ENCODE measurements at regions of chr21 and their contacts with region 1.

Region 1: GRCh38 chr21:20999659-21000058 is 1.4 kb downstream of the NCAM2 start:
- DNase-seq: peak; percentile 62
- H3K4me3 ChIP-seq: peak overlapping the region; percentile 1 to 95; a peak in 2 of 4 replicates
- H3K27ac ChIP-seq: no peak overlapping the region
- H3K4me1 ChIP-seq: peaks cover 0 to 7% of the 10 kb centered on the region in 2 experiments; a peak in 2 of 4 replicates
- H3K27me3 ChIP-seq: no peaks in the 10 kb centered on the region
- CTCF ChIP-seq: peak; percentile 90
- EP300 ChIP-seq: no peak
- RAD21 ChIP-seq: peak; percentile 96

Region 2: DNA sequence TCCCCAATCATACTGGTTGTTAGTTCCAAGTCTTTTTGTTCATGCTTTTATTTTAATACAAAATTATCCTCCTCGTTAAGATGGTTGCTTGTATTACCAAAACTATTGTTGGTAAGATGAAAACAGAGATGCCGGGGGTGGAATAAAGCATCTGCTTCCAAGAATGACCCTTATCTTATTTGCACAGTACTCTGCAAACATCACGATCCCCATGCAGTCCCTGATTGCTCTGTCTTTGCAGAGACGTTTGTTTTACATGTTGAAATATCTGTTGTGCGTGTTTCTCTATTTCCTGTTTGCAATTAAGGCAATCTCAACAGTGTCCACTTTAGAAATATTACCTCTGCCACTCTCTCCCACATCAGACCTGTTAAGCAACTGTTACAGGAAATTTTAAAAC is 142.7 kb before region 1 on chr21:
- CTCF ChIA-PET with region 1: no interaction called
- POLR2A ChIA-PET with region 1: no interaction called
- DNase-seq: no peak
- H3K4me3 ChIP-seq: no peak overlapping the region
- H3K27ac ChIP-seq: no peak overlapping the region
- H3K4me1 ChIP-seq: no peaks in the 10 kb centered on the region
- H3K27me3 ChIP-seq: no peaks in the 10 kb centered on the region
- CTCF ChIP-seq: no peak
- EP300 ChIP-seq: no peak
- RAD21 ChIP-seq: no peak

Region 3: GRCh38 chr21:21018821-21019220 is 19.2 kb after region 1 on chr21:
- CTCF ChIA-PET with region 1: interaction called, 17 read pairs
- POLR2A ChIA-PET with region 1: no interaction called
- DNase-seq: no peak
- H3K4me3 ChIP-seq: no peak overlapping the region
- H3K27ac ChIP-seq: no peak overlapping the region
- H3K4me1 ChIP-seq: peaks cover 0 to 2% of the 10 kb centered on the region in 2 experiments; a peak in 2 of 4 replicates
- H3K27me3 ChIP-seq: no peaks in the 10 kb centered on the region
- CTCF ChIP-seq: no peak
- EP300 ChIP-seq: no peak
- RAD21 ChIP-seq: no peak

Region 4: DNA sequence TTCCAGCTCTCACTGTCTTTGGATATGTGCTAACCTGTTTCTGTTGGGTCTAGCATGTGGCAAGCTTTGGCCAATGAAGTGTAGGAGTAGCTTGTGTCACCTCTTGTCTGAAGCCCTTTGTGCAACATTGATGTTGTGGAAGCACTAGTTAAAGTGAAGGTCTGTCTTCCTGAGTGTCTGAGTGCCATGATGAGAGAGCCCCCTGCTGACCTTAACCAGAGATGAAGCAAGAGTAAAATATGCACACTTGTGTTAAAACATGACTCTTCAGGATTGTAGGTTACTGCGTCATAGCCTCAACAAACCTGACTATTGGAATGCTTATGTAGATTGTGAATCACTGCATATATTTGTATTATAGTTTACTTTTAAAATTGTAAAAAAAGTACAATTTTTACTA is 102.3 kb after region 1 on chr21:
- CTCF ChIA-PET with region 1: interaction called, 51 read pairs
- POLR2A ChIA-PET with region 1: no interaction called
- DNase-seq: peak; percentile 15
- H3K4me3 ChIP-seq: no peak overlapping the region; a peak in 1 of 4 replicates
- H3K27ac ChIP-seq: no peak overlapping the region
- H3K4me1 ChIP-seq: no peaks in the 10 kb centered on the region
- H3K27me3 ChIP-seq: no peaks in the 10 kb centered on the region
- CTCF ChIP-seq: peak; percentile 44
- EP300 ChIP-seq: no peak
- RAD21 ChIP-seq: peak; percentile 74

Region 5: DNA sequence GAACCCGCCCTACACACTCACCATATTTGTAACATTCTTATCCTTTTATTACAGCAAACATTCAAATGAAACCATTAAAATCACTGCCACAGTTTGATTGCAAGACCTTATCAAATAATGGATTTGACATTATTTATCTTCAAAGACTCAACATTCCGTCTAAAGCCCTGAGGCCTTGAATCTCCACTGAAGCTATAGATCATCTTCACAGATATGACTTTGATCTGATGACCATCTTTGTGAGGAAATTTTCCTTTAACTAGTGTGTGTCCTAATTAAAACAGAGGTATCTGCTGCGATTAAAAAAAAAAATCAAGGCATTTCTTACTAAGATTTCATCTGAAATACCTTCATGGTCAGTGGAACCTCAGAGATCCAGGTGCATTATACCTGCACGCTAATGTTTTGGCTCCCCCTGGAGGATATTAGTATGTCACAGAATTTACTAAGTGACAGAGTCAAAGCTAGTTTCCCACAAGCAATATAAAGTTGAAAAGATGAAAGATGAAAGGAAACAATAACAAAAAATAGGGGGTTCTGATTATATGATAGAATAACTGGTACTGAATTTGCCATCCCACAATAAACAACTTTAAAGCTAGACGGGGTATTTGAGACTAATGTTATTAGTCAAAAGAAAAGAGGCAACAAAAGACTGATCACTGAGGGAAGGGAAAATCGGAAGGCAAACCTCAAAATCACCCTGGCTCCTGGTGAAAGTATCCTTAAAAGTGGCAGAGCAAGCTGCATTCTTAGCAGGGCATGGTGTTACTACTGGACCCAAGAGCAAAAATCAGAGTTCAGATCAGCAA is 922.0 kb after region 1 on chr21:
- CTCF ChIA-PET with region 1: interaction called, 10 read pairs
- POLR2A ChIA-PET with region 1: no interaction called
- DNase-seq: peak; percentile 16
- H3K4me3 ChIP-seq: no peak overlapping the region; a peak in 1 of 4 replicates
- H3K27ac ChIP-seq: no peak overlapping the region
- H3K4me1 ChIP-seq: peaks cover 0 to 4% of the 10 kb centered on the region in 2 experiments; a peak in 2 of 4 replicates
- H3K27me3 ChIP-seq: no peaks in the 10 kb centered on the region
- CTCF ChIP-seq: peak; percentile 88
- EP300 ChIP-seq: no peak; a peak in 1 of 4 replicates
- RAD21 ChIP-seq: peak; percentile 88